Activated naive CD4-positive, alpha-beta T cell treated with anti-CD3 and anti-CD28 coated beads for 36 hours (primary cell): ENCODE measurements at regions of chr18 and their contacts with region 1.

Region 1: GRCh38 chr18:35592298-35592697 is 10.8 kb downstream of the GALNT1 start:
- DNase-seq: peak; percentile 24
- H3K4me3 Mint-ChIP-seq: no peak overlapping the region
- H3K27ac Mint-ChIP-seq: no peak overlapping the region
- H3K4me1 Mint-ChIP-seq: peaks cover 42% of the 10 kb centered on the region
- H3K27me3 Mint-ChIP-seq: no peaks in the 10 kb centered on the region

Region 2: DNA sequence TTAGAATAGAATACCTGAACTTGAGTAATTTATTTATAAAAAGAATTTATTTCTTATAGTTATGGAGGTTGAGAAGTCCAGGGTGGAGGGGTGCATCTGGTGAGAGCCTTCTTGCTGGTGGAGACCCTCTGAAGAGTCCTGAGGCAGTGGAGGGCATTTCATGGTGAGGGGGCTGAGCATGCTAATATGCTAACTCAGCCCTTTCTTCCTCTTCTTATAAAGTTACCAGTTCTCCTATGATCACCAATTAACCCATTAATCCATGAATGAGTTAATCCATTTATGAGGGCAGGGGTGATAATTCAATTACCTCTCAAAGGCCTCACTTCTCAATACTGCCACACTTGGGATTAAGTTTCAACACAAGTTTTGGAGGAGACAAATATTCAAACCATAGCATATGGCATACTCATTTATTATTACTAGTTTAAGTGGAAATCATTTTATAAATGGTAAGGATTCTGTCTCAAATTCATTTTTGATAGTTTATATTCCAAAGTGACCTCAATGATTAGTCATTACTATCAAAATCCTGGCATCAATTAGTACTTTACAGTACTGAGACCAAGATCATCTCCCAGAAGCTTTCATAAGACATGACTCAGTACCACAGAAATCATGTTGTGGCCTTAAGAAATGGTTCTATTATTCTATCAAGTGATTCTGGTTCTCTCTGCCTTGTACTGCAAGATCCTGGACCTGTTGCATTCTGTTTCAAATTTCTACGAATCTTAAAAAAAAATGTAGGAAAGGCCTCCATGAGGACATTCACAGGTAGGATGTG is 220.7 kb before region 1 on chr18:
- CTCF ChIA-PET with region 1: no interaction called
- intact Hi-C with region 1: no loop called
- DNase-seq: no peak
- H3K4me3 Mint-ChIP-seq: no peak overlapping the region
- H3K27ac Mint-ChIP-seq: no peak overlapping the region
- H3K4me1 Mint-ChIP-seq: peaks cover 8% of the 10 kb centered on the region
- H3K27me3 Mint-ChIP-seq: no peaks in the 10 kb centered on the region

Region 3: DNA sequence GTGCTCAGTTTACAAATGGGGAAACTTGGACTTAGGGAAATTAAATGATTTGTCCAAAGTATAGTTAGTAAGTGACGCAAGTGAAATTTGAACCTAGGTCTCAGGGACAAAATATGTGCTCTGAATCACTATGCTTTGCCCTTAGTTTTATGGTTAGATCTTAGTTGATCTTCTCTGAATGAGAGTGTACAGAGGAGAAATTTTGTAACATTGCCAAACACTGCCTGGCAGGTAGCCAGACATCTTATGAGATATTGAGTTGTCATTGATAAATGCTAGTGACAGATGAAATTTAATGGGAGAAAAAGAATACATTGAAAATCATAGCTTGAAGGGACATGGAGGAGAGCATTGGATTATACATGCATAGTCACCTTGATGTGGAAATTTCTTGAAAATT is 80.6 kb after region 1 on chr18:
- CTCF ChIA-PET with region 1: no interaction called
- intact Hi-C with region 1: loop called (anchors 5 kb)
- DNase-seq: no peak
- H3K4me3 Mint-ChIP-seq: no peak overlapping the region
- H3K27ac Mint-ChIP-seq: no peak overlapping the region
- H3K4me1 Mint-ChIP-seq: no peaks in the 10 kb centered on the region
- H3K27me3 Mint-ChIP-seq: no peaks in the 10 kb centered on the region

Region 4: DNA sequence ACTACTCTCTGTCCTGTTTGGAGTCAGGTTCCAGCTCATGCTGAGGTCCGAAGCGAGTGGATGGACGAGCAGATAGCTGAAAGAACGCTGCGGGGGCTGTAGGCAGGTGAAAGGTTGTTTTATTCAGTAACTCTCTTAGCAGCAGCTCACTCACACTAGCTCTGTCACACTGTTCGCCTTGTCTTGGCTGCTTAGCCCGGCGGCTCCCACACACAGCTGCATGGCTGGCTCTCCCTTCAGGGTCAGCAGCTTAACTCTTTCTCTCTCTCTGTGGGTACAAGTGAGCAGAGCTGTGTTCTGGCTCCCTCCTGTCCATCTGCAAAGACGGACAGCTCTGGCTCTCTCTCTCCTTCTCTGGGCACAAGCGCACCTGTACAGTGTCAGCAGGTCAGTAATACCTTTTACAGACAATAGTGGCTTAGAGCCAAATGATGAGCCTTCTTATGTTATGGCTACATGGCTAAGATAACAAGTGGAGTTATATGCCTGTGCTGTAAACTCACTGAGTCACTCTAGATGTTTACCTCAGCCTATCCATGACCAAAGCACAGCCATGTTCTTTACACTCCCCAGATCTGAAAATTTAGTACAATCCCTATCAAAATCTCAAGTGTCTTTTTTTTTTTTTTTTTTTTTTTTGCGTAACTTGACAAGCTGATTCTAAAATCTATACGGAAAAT is 138.5 kb after region 1 on chr18:
- CTCF ChIA-PET with region 1: no interaction called
- intact Hi-C with region 1: no loop called
- DNase-seq: no peak
- H3K4me3 Mint-ChIP-seq: no peak overlapping the region
- H3K27ac Mint-ChIP-seq: no peak overlapping the region
- H3K4me1 Mint-ChIP-seq: no peaks in the 10 kb centered on the region
- H3K27me3 Mint-ChIP-seq: no peaks in the 10 kb centered on the region

Region 5: GRCh38 chr18:35756506-35757117 is 164.3 kb after region 1 on chr18:
- CTCF ChIA-PET with region 1: interaction called, 3 read pairs
- intact Hi-C with region 1: loop called (anchors 1 kb)
- DNase-seq: peak; percentile 78
- H3K4me3 Mint-ChIP-seq: no peak overlapping the region
- H3K27ac Mint-ChIP-seq: no peak overlapping the region
- H3K4me1 Mint-ChIP-seq: no peaks in the 10 kb centered on the region
- H3K27me3 Mint-ChIP-seq: peaks cover 18% of the 10 kb centered on the region